ENCODE measurements at regions of chr9 and their contacts with region 1.

Region 1: GRCh38 chr9:132879457-132880320 is 991 bp downstream of the SPACA9 start:
- DNase-seq: no peak
- ATAC-seq: no peak

Region 2: DNA sequence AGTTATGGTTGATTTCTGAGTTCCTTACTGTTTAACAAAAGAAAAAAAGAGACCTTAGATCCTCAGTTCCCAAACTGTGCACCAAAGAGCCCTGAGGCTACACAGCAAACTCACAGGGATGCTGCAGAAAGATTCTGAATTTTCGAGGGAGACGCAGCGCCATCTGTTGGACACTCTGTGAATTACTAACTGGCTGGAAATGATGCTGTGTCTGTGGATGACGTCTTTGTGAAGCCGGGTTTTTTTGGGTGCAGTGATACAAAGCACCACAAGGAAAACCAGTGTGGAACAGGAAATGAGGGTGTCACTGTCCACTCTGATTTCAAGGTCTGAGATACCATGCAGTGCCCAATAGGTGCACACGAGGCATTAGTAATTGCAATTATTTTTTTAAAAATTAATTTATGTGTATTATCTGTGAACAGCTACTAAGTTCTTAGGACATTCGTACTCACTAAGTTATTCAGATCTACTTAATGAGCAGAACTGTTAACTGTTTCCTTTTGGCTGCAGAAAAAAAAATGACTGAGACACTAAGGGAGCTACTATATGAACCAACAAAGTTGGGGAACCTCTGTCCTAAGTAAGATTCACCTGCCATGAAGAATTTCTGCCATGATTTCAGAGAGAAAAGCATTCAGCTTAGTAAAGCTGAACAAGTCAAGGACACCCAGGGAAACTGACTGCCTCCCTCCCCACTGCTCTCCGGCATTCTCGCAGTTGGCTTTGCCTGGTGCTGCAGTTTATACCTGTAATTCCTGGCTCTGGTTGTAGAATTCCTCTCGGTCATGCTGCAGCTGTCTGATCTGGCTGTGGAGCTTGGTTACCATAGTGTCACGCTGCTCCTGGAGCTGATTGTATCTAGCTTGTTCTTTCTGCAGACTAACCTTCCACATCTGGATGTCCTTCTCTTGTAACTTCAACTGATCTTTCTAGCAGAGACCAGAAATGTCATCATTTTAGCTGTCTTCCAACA is 22.5 kb after region 1 on chr9:
- intact Hi-C with region 1: loop called (anchors 1 kb)
- DNase-seq: peak; percentile 81
- ATAC-seq: peak; percentile 89

Region 3: DNA sequence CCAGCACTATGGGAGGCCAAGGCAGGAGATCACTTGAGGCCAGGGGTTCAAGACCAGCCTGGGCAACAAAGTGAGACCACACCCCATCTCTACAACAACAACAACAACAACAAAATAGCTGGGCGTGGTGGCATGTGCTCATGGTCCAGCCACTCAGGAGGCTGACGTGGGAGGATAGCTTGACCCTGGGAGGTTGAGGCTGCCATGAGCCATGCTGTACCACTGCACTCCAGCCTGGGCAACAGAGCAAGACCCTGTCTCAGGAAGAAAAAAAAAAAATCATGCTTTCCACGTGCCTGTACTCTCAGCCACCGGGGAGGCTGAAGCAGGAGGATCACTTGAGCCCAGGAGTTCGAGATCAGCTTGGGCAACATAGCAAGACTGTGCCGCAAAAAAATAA is 35.2 kb after region 1 on chr9:
- intact Hi-C with region 1: no loop called
- DNase-seq: no peak
- ATAC-seq: no peak